Common myeloid progenitor, CD34-positive (primary cell): ENCODE measurements at regions of chr2 and their contacts with region 1.

Region 1: GRCh38 chr2:119476301-119477021 is 44.8 kb downstream of the TMEM37 start:
- DNase-seq: peak; percentile 28 to 54 (median 47)
- H3K4me3 ChIP-seq: no peak overlapping the region
- H3K27ac ChIP-seq: no peak overlapping the region
- H3K4me1 ChIP-seq: peaks cover 0 to 3% (median under 1%) of the 10 kb centered on the region in 4 experiments
- H3K27me3 ChIP-seq: peaks cover 0 to 2% (median 0%) of the 10 kb centered on the region in 5 experiments

Region 2: DNA sequence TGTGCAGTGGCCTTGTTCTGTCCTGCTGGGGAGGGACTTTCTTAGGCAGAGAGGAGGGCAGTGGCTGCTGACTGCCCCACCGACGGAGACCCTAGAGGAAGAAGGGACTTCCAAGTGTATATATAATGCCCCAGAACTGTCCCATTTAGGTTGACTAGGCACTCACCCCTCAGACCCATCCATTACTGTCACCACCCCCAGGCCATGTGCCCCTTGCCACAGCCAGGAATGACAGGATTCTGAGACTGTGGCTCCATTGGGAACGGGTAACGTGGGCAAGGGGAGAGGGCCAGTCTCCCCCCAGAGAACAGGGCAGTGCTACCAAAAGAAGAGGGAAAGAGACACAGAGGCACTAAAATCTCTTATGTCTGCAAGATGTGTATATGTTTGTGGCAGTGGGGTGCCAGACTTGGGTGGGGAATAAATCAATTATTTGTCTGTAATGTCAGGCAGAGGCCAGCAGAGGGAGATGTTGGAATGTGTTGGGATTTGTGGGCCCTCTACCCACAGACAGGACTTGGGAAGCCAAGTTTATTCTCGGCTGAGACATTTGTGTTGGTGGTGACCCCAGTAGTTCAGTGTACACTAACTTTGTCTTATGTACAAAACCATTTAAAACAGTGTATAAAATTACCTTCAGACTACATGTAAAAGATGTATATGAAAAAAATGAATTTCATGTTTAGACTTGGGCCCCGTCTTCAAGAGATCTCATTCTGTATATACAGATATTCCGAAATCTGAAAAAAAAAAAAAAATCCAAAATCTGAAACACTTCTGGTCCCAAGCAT is 68.8 kb before region 1 on chr2:
- CTCF ChIA-PET with region 1: interaction called, 18 read pairs
- POLR2A ChIA-PET with region 1: no interaction called
- DNase-seq: peak; percentile 63 to 76 (median 70)
- H3K4me3 ChIP-seq: no peak overlapping the region
- H3K27ac ChIP-seq: no peak overlapping the region
- H3K4me1 ChIP-seq: no peaks in the 10 kb centered on the region
- H3K27me3 ChIP-seq: no peaks in the 10 kb centered on the region

Region 3: GRCh38 chr2:119459841-119460475 is 16.5 kb before region 1 on chr2:
- CTCF ChIA-PET with region 1: interaction called, 18 read pairs
- POLR2A ChIA-PET with region 1: no interaction called
- DNase-seq: no peak
- H3K4me3 ChIP-seq: no peak overlapping the region
- H3K27ac ChIP-seq: no peak overlapping the region
- H3K4me1 ChIP-seq: no peaks in the 10 kb centered on the region
- H3K27me3 ChIP-seq: peaks cover 0 to 3% (median 0%) of the 10 kb centered on the region in 5 experiments

Region 4: GRCh38 chr2:119464981-119465380 is 11.5 kb before region 1 on chr2:
- CTCF ChIA-PET with region 1: interaction called, 18 read pairs
- POLR2A ChIA-PET with region 1: no interaction called
- DNase-seq: no peak
- H3K4me3 ChIP-seq: no peak overlapping the region
- H3K27ac ChIP-seq: no peak overlapping the region
- H3K4me1 ChIP-seq: no peaks in the 10 kb centered on the region
- H3K27me3 ChIP-seq: no peaks in the 10 kb centered on the region

Region 5: GRCh38 chr2:119487434-119488244 is 11.2 kb after region 1 on chr2:
- CTCF ChIA-PET with region 1: interaction called, 25 read pairs
- POLR2A ChIA-PET with region 1: no interaction called
- DNase-seq: peak in 2 of 3 donors; percentile 11 to 12
- H3K4me3 ChIP-seq: no peak overlapping the region
- H3K27ac ChIP-seq: no peak overlapping the region
- H3K4me1 ChIP-seq: peaks cover 0 to 16% (median 10%) of the 10 kb centered on the region in 4 experiments
- H3K27me3 ChIP-seq: no peaks in the 10 kb centered on the region